A549 (cell line): ENCODE measurements at regions of chr13 and their contacts with region 1.

Region 1: DNA sequence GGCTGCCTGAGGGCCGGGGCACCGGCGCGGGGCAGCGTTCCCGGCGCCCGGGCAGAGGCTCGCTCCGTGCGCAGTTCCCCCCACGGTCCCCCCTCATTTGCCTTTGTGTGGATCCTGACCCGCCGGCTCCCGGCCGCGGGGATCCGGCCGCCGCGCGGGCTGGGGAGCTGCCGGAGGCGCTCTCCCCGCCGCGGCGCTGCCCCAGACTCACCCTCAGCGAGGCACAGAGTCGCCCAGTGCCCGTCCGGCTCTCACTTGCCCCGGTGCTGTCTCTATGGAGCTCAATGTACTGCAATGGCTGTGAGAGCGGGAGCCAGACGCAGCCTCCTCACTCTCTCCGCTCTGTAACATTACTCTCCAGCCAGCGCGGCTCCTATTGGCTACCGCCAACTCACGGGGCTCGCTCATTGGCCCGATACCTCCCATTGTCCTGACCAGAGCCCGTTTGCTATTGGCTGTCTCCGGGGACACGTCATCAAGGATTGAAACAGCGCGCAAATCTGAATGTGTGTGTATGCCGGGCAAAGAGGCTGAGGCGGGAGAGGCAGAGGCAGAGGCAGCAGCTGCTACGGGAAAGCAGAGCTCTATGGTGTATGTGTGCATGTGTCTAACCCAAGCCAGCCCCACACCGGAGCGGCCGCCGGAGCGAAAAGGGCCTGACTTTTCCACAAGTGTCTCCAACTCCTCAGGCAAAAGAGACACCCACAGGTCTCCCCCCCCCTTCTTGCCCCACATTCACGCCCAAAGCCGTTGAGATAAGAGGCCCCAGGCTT is at the start of gene HMGB1:
- DNase-seq: peak; percentile 92 to 97
- ATAC-seq: peak; percentile 97 to 99
- H3K4me3 ChIP-seq: peak within 1 kb of the TSS; percentile 100
- H3K27ac ChIP-seq: peak within 1 kb of the TSS; percentile 98 to 100
- H3K4me1 ChIP-seq: peaks cover 24% of the 10 kb centered on the region
- CTCF ChIP-seq: no peak
- EP300 ChIP-seq: no peak
- POLR2A ChIP-seq: peak; percentile 50
- RAD21 ChIP-seq: no peak
- polyA plus RNA-seq, gene HMGB1: 295 and 353 TPM in 2 replicates

Region 2: GRCh38 chr13:30454991-30455390 is 10.8 kb before region 1 on chr13:
- CTCF ChIA-PET with region 1: no interaction called
- POLR2A ChIA-PET with region 1: no interaction called
- DNase-seq: no peak
- ATAC-seq: peak; percentile 67; a peak in 5 of 6 replicates
- H3K4me3 ChIP-seq: no peak overlapping the region
- H3K27ac ChIP-seq: no peak overlapping the region
- H3K4me1 ChIP-seq: no peaks in the 10 kb centered on the region
- CTCF ChIP-seq: no peak
- EP300 ChIP-seq: no peak
- POLR2A ChIP-seq: no peak
- RAD21 ChIP-seq: no peak

Region 3: DNA sequence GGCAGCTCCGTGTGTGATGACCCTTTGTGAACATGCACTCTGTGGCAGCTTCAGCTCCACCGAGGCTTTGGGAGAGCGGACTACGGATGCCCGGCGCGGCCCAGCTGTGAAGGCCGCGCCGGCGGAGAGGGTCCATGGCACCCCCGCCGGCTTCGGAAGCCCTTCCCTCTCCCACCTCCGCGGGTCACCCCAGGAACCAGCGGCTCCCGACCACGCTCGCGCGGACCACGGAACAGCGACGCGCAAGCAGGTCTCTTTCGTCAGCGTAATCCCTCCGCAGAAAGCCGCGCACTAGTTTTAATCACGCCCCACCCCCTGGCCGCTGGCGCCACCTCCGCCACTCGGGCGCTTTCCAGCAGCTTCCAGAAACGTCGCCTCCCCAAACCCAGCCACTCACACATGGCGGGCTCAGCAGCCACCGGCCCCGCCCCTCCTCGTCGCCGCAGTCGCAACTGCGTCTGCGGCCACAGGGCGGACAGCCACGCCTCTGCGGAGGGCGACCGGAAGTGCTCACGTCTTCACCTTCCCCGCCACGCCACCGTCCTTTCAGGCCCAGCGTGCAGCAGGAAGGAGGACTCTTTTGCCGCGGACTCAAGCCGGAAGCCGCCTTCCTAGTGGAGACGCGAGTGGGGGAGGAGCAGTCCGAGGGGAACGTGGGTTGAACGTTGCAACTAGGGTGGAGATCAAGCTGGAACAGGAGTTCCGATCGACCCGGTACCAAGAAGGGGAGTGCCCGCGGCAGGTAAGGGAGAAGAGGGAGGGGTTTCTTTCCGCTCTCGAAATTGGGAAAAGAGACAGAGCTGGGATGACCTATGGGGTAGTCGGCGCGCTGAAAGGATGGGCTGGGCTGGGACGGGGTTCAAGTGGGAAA is 151.8 kb after region 1 on chr13 and contains the start of gene USPL1:
- CTCF ChIA-PET with region 1: no interaction called
- POLR2A ChIA-PET with region 1: interaction called, 17 read pairs
- DNase-seq: peak; percentile 73 to 99
- ATAC-seq: peak; percentile 94 to 95
- H3K4me3 ChIP-seq: peak within 1 kb of the TSS; percentile 82
- H3K27ac ChIP-seq: peak within 1 kb of the TSS; percentile 97 to 98
- H3K4me1 ChIP-seq: peaks cover 20% of the 10 kb centered on the region; the same call in 2 of the 3 replicates
- CTCF ChIP-seq: no peak
- EP300 ChIP-seq: no peak
- POLR2A ChIP-seq: peak; percentile 79
- RAD21 ChIP-seq: no peak; a peak in 1 of 5 replicates
- polyA plus RNA-seq, gene USPL1: 22.7 and 23.0 TPM in 2 replicates